ENCODE measurements at regions of chr12 and their contacts with region 1.

Region 1: GRCh38 chr12:106841510-106842302 is 67.2 kb downstream of the RIC8B start:
- DNase-seq: peak; percentile 52
- ATAC-seq: no peak
- H3K4me3 ChIP-seq: no peak overlapping the region
- H3K4me3 Mint-ChIP-seq: no peak overlapping the region
- H3K27ac ChIP-seq: no peak overlapping the region
- H3K27ac Mint-ChIP-seq: no peak overlapping the region
- H3K4me1 ChIP-seq: no peaks in the 10 kb centered on the region
- H3K4me1 Mint-ChIP-seq: no peaks in the 10 kb centered on the region
- H3K27me3 ChIP-seq: no peaks in the 10 kb centered on the region
- H3K27me3 Mint-ChIP-seq: no peaks in the 10 kb centered on the region
- CTCF ChIP-seq: peak; percentile 70

Region 2: DNA sequence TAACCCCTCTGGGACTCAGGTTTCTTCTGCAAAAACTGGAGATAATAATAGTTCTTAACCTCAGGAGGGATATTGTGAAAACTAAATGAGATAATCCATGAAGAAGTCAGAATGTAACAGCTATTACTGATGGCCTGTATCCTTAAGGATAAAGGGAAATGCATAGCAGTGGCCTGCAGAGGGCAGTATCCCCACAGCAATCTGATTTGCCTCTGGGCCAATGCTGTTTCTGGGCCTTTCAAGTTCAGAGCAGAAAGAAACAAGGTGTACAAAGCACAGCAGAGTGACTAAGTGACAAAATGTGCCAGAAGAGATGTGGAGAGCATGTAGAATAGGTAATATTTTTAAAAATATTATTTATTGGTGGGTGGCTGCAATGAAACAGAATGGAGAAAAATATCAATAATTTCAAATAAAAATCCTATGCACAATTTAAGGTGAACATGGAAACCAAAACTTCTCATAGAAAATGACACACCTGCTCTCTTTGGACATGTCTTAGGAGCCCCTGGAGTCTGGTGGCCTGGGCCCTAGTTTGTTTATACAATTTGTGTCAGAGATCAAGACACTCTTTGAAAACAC is 1421.0 kb before region 1 on chr12:
- CTCF ChIA-PET with region 1: no interaction called
- POLR2A ChIA-PET with region 1: no interaction called
- intact Hi-C with region 1: loop called (anchors 5 kb)
- DNase-seq: peak; percentile 54
- ATAC-seq: peak; percentile 58
- H3K4me3 ChIP-seq: no peak overlapping the region
- H3K4me3 Mint-ChIP-seq: no peak overlapping the region
- H3K27ac ChIP-seq: no peak overlapping the region
- H3K27ac Mint-ChIP-seq: no peak overlapping the region
- H3K4me1 ChIP-seq: no peaks in the 10 kb centered on the region
- H3K4me1 Mint-ChIP-seq: no peaks in the 10 kb centered on the region
- H3K27me3 ChIP-seq: peaks cover 0 to 8% (median 0%) of the 10 kb centered on the region in 4 experiments
- H3K27me3 Mint-ChIP-seq: peaks cover 17% of the 10 kb centered on the region
- CTCF ChIP-seq: peak; percentile 94

Region 3: DNA sequence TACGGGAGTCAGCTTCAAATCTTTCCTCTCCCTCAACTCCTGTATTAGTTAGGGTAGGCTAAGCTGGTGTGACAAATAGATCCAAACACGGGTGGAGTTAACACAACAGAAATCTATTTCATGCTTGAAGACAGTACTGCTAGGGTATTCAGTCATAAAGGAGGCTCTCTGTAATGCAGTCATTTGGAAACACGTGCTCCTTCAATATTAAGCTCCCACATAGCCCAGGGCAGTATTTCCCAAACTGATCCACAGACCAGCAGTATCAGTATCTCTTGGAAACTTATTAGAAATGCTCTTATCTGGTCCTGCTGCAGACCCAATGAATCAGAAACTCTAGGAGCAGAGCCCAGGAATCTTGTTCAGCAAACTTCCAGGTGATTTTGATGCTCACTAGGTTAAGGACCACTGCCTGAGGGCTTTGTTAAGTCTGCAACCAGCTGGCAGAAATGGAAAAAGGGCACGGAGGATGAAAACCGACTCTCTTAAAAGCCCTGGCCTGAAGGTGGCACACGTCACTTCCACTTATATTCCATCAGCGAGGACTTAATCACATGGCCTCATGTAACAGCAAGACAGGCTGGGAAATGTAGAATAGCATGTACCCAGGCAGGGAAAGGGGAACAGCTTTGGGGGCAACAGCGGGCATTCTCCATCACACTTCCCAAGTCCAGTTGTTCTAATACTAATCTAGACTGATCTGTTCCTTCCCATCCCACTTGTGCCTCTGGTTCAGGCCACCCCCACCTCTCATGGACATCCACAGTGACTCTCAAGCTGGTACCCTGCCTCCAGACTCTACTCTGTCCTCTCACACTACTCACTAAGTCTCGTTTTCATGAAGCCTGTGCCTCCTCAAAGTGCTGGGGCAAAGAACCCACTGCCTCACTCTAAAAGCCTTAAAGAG is 105.4 kb before region 1 on chr12:
- CTCF ChIA-PET with region 1: interaction called, 15 read pairs
- POLR2A ChIA-PET with region 1: no interaction called
- intact Hi-C with region 1: loop called (anchors 1 kb)
- DNase-seq: peak; percentile 29
- ATAC-seq: no peak
- H3K4me3 ChIP-seq: no peak overlapping the region
- H3K4me3 Mint-ChIP-seq: no peak overlapping the region
- H3K27ac ChIP-seq: no peak overlapping the region
- H3K27ac Mint-ChIP-seq: no peak overlapping the region
- H3K4me1 ChIP-seq: no peaks in the 10 kb centered on the region
- H3K4me1 Mint-ChIP-seq: no peaks in the 10 kb centered on the region
- H3K27me3 ChIP-seq: peaks cover 0 to 20% (median 19%) of the 10 kb centered on the region in 4 experiments
- H3K27me3 Mint-ChIP-seq: peaks cover 39% of the 10 kb centered on the region
- CTCF ChIP-seq: no peak

Region 4: GRCh38 chr12:106819991-106820390 is 21.7 kb before region 1 on chr12:
- CTCF ChIA-PET with region 1: no interaction called
- POLR2A ChIA-PET with region 1: no interaction called
- intact Hi-C with region 1: no loop called
- DNase-seq: no peak
- ATAC-seq: no peak
- H3K4me3 ChIP-seq: no peak overlapping the region
- H3K4me3 Mint-ChIP-seq: no peak overlapping the region
- H3K27ac ChIP-seq: no peak overlapping the region
- H3K27ac Mint-ChIP-seq: no peak overlapping the region
- H3K4me1 ChIP-seq: no peaks in the 10 kb centered on the region
- H3K4me1 Mint-ChIP-seq: no peaks in the 10 kb centered on the region
- H3K27me3 ChIP-seq: no peaks in the 10 kb centered on the region
- H3K27me3 Mint-ChIP-seq: no peaks in the 10 kb centered on the region
- CTCF ChIP-seq: no peak

Region 5: GRCh38 chr12:107014028-107014427 is 172.3 kb after region 1 on chr12:
- CTCF ChIA-PET with region 1: no interaction called
- POLR2A ChIA-PET with region 1: no interaction called
- intact Hi-C with region 1: no loop called
- DNase-seq: peak; percentile 11
- ATAC-seq: no peak
- H3K4me3 ChIP-seq: no peak overlapping the region
- H3K4me3 Mint-ChIP-seq: no peak overlapping the region
- H3K27ac ChIP-seq: no peak overlapping the region
- H3K27ac Mint-ChIP-seq: no peak overlapping the region
- H3K4me1 ChIP-seq: no peaks in the 10 kb centered on the region
- H3K4me1 Mint-ChIP-seq: no peaks in the 10 kb centered on the region
- H3K27me3 ChIP-seq: no peaks in the 10 kb centered on the region
- H3K27me3 Mint-ChIP-seq: no peaks in the 10 kb centered on the region
- CTCF ChIP-seq: no peak

Measured in B cell (primary cell).